Activated CD4-positive, alpha-beta memory T cell treated with anti-CD3 and anti-CD28 coated beads for 36 hours (primary cell): ENCODE measurements at regions of chr10 and their contacts with region 1.

Region 1: GRCh38 chr10:131900350-131901146 is at the start of gene PPP2R2D:
- DNase-seq: peak; percentile 96
- H3K4me3 Mint-ChIP-seq: peak within 1 kb of the TSS; percentile 86
- H3K27ac Mint-ChIP-seq: peak within 1 kb of the TSS; percentile 92
- H3K4me1 Mint-ChIP-seq: peaks cover 45% of the 10 kb centered on the region
- H3K27me3 Mint-ChIP-seq: peaks cover 7% of the 10 kb centered on the region
- total RNA-seq, gene PPP2R2D: 31.9 to 32.3 TPM

Region 2: GRCh38 chr10:130110246-130111112 is 1790.1 kb before region 1 on chr10 and contains the start of gene C10orf143:
- CTCF ChIA-PET with region 1: no interaction called
- POLR2A ChIA-PET with region 1: no interaction called
- intact Hi-C with region 1: loop called (anchors 10 kb)
- DNase-seq: peak; percentile 98
- H3K4me3 Mint-ChIP-seq: peak within 1 kb of the TSS; percentile 88
- H3K27ac Mint-ChIP-seq: peak within 1 kb of the TSS; percentile 99
- H3K4me1 Mint-ChIP-seq: peaks cover 46% of the 10 kb centered on the region
- H3K27me3 Mint-ChIP-seq: no peaks in the 10 kb centered on the region
- total RNA-seq, gene C10orf143: 2.5 to 3.0 TPM

Region 3: GRCh38 chr10:131697476-131698128 is 202.9 kb before region 1 on chr10:
- CTCF ChIA-PET with region 1: no interaction called
- POLR2A ChIA-PET with region 1: no interaction called
- intact Hi-C with region 1: no loop called
- DNase-seq: peak; percentile 1
- H3K4me3 Mint-ChIP-seq: no peak overlapping the region
- H3K27ac Mint-ChIP-seq: no peak overlapping the region
- H3K4me1 Mint-ChIP-seq: no peaks in the 10 kb centered on the region
- H3K27me3 Mint-ChIP-seq: peaks cover 5% of the 10 kb centered on the region

Region 4: DNA sequence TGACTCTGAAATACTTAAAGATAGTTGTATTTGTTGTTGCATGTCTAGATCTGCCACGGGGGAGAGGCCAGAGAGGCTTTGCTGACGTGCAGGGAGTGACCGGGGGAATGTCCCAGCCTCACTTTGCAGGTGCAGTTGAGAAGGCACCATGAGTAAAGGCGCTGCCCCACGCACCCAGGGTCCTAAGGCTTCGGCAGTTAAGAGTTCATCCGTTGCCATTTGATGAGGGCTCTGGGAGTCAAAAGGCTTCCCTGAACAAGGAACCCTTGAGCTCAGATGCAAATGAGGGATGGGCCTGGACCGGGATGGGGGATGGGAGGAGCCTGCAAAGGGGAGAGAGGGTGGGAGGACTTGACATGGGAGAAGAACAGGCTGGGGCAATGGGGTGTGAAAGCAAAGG is 20.6 kb after region 1 on chr10:
- CTCF ChIA-PET with region 1: no interaction called
- POLR2A ChIA-PET with region 1: no interaction called
- intact Hi-C with region 1: loop called (anchors 1 kb)
- DNase-seq: no peak
- H3K4me3 Mint-ChIP-seq: no peak overlapping the region
- H3K27ac Mint-ChIP-seq: peak overlapping the region; percentile 6
- H3K4me1 Mint-ChIP-seq: peaks cover 64% of the 10 kb centered on the region
- H3K27me3 Mint-ChIP-seq: no peaks in the 10 kb centered on the region

Region 5: GRCh38 chr10:131972474-131973071 is 72.0 kb after region 1 on chr10:
- CTCF ChIA-PET with region 1: interaction called, 3 read pairs
- POLR2A ChIA-PET with region 1: interaction called, 7 read pairs
- intact Hi-C with region 1: loop called (anchors 2 kb)
- DNase-seq: peak; percentile 58
- H3K4me3 Mint-ChIP-seq: peak overlapping the region; percentile 66
- H3K27ac Mint-ChIP-seq: peak overlapping the region; percentile 89
- H3K4me1 Mint-ChIP-seq: peaks cover 60% of the 10 kb centered on the region
- H3K27me3 Mint-ChIP-seq: no peaks in the 10 kb centered on the region

Region 6: DNA sequence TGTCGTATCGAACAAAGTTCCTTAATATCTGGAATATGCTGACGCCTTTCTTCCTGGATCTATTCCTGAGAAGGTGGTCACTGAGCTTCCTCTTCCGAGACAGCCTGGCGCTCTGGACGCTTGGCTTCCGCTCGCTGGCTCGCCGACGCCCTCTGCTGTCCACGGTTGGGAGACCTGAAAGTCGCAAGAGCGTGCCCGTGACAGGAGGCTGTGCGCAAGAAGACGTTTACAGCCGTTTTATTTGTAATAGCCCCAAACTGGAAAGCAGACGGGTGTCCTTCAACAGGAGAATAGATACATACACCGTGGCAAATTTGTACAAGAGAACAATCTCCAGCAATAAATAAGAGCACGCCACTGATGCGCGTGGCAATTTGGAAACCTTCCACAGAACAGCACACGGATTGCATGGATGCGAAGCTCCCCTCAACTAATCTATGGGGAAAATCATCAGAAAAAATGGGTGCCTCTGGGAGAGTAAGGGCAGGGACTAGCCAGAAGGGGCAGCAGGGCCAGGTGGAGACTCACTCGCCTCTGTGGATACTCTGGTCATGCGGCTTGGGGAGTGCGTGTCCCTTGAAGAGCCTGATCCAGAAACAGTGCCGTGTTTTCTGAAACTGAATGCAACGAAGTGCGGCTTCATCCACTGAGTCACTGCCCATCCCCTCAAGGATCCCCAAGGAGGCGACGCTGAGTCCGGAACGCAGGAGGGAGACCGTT is 122.7 kb after region 1 on chr10:
- CTCF ChIA-PET with region 1: interaction called, 15 read pairs
- POLR2A ChIA-PET with region 1: no interaction called
- intact Hi-C with region 1: no loop called
- DNase-seq: peak; percentile 85
- H3K4me3 Mint-ChIP-seq: no peak overlapping the region
- H3K27ac Mint-ChIP-seq: no peak overlapping the region
- H3K4me1 Mint-ChIP-seq: peaks cover 5% of the 10 kb centered on the region
- H3K27me3 Mint-ChIP-seq: peaks cover 20% of the 10 kb centered on the region

Region 7: GRCh38 chr10:132331526-132332432 is 431.2 kb after region 1 on chr10 and contains the start of gene LRRC27:
- CTCF ChIA-PET with region 1: no interaction called
- POLR2A ChIA-PET with region 1: no interaction called
- intact Hi-C with region 1: loop called (anchors 5 kb)
- DNase-seq: peak; percentile 99
- H3K4me3 Mint-ChIP-seq: peak within 1 kb of the TSS; percentile 90
- H3K27ac Mint-ChIP-seq: peak within 1 kb of the TSS; percentile 91
- H3K4me1 Mint-ChIP-seq: peaks cover 48% of the 10 kb centered on the region
- H3K27me3 Mint-ChIP-seq: peaks cover 1% of the 10 kb centered on the region
- total RNA-seq, gene LRRC27: 2.5 to 2.8 TPM

Region 8: GRCh38 chr10:132836832-132837540 is 936.4 kb after region 1 on chr10:
- CTCF ChIA-PET with region 1: no interaction called
- POLR2A ChIA-PET with region 1: no interaction called
- intact Hi-C with region 1: no loop called
- DNase-seq: peak; percentile 49
- H3K4me3 Mint-ChIP-seq: no peak overlapping the region
- H3K27ac Mint-ChIP-seq: no peak overlapping the region
- H3K4me1 Mint-ChIP-seq: no peaks in the 10 kb centered on the region
- H3K27me3 Mint-ChIP-seq: peaks cover 6% of the 10 kb centered on the region

Region 9: GRCh38 chr10:133278577-133279265 is 1378.2 kb after region 1 on chr10:
- CTCF ChIA-PET with region 1: no interaction called
- POLR2A ChIA-PET with region 1: no interaction called
- intact Hi-C with region 1: loop called (anchors 1 kb)
- DNase-seq: peak; percentile 83
- H3K4me3 Mint-ChIP-seq: peak overlapping the region; percentile 63
- H3K27ac Mint-ChIP-seq: peak overlapping the region; percentile 85
- H3K4me1 Mint-ChIP-seq: peaks cover 28% of the 10 kb centered on the region
- H3K27me3 Mint-ChIP-seq: no peaks in the 10 kb centered on the region